Activated CD4-positive, alpha-beta T cell treated with anti-CD3 and anti-CD28 coated beads for 36 hours (primary cell): ENCODE measurements at regions of chr7 and their contacts with region 1.

Region 1: GRCh38 chr7:139771001-139771970 is 6.5 kb downstream of the HIPK2 start:
- DNase-seq: no peak
- ATAC-seq: peak; percentile 37
- H3K4me3 Mint-ChIP-seq: peak overlapping the region; percentile 5
- H3K27ac Mint-ChIP-seq: peak overlapping the region; percentile 79
- H3K4me1 Mint-ChIP-seq: peaks cover 90% of the 10 kb centered on the region
- H3K27me3 Mint-ChIP-seq: no peaks in the 10 kb centered on the region

Region 2: GRCh38 chr7:139725858-139726484 is 45.3 kb before region 1 on chr7:
- CTCF ChIA-PET with region 1: interaction called, 4 read pairs
- POLR2A ChIA-PET with region 1: interaction called, 3 read pairs
- intact Hi-C with region 1: loop called in 1 of 2 experiments (anchors 1 kb)
- DNase-seq: no peak
- ATAC-seq: no peak
- H3K4me3 Mint-ChIP-seq: no peak overlapping the region
- H3K27ac Mint-ChIP-seq: no peak overlapping the region
- H3K4me1 Mint-ChIP-seq: peaks cover 54% of the 10 kb centered on the region
- H3K27me3 Mint-ChIP-seq: no peaks in the 10 kb centered on the region

Region 3: DNA sequence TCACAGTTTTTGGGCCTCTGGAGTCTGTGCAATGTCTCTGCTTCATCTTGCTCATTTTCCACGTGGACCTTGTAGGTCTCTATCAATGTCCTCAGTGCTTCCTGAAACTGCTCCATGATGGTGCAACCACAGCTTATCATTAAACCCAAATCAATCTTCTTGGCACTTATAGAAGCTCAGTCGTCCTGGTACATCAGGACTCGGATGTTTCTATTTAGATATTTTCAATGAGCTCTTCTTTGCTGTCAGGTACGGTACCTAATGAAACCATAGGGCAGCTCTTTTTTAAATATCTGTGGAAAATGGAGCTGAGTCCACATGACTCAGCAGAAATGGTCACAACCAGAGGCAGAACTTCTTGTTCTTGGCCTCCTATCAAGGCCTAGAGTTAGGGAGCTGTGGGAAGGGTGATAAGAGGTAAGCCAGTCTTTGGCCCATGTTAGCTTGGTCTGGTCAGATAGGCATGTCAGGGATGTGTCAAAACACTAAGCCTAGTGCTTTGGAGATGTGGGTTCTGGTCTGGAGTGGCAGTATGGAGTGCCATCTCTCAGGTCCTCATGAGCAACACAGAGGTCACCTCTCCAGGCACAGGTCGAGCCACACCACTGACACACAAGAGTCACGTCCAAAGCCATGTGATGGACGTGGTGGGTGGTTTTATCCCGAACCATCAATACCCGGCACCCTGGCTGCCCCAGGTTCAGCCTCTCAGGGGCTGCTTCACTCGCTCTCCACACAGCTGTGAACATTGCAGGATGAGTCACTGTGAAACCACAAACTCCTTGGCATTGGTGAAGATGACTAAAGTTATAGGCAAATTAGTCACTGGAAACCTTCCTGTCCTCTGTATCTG is 144.8 kb after region 1 on chr7:
- CTCF ChIA-PET with region 1: interaction called, 3 read pairs
- POLR2A ChIA-PET with region 1: no interaction called
- intact Hi-C with region 1: loop called (anchors 1 kb)
- DNase-seq: peak; percentile 83
- ATAC-seq: peak; percentile 95
- H3K4me3 Mint-ChIP-seq: peak overlapping the region; percentile 35
- H3K27ac Mint-ChIP-seq: peak overlapping the region; percentile 52
- H3K4me1 Mint-ChIP-seq: peaks cover 25% of the 10 kb centered on the region
- H3K27me3 Mint-ChIP-seq: peaks cover 3% of the 10 kb centered on the region

Region 4: GRCh38 chr7:140375892-140376730 is 604.8 kb after region 1 on chr7:
- CTCF ChIA-PET with region 1: interaction called, 4 read pairs
- POLR2A ChIA-PET with region 1: no interaction called
- intact Hi-C with region 1: loop called in 1 of 2 experiments (anchors 5 kb)
- DNase-seq: peak; percentile 45
- ATAC-seq: peak; percentile 90
- H3K4me3 Mint-ChIP-seq: peak overlapping the region; percentile 57
- H3K27ac Mint-ChIP-seq: peak overlapping the region; percentile 95
- H3K4me1 Mint-ChIP-seq: peaks cover 53% of the 10 kb centered on the region
- H3K27me3 Mint-ChIP-seq: no peaks in the 10 kb centered on the region